HCT116 (cell line): ENCODE measurements at regions of chr3 and their contacts with region 1.

Region 1: DNA sequence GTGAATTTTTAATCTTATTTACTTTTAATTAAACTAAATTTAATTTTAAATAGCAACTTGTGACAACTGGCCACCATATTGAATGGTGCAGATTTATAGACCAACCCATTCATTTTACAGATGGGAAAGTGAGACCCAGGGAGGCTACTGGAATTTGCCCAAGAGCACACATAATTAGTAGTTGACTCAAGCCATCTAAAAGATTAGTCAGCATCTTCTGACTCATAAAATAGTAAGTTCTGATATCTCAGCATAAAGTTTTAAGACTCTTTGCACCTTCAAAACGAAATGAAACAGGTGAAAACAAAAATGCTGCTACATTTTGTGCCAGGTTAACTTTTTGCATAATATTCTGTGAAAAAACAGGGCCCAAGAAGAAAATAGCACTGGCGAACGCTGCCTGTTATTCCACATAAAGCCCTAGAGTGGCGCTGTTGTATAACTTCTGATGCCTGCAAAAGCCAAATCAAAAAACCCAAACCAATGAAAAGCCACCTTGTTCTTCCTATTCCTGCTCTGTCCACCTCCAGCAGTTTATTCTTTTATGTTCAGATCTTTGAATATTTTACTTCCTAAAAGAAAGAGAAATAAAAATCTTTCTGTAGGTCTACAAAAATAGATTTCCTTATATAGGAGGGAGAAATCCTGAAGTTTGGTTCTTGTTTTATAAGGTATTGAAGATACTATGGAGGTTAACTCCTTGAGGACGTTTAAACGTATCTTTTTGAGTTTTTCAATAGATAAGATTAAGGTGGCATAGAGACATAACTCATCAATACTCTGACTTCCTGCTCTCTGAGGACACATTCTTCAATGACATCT is 62.8 kb downstream of the OTOL1 start:
- DNase-seq: peak; percentile 39
- ATAC-seq: peak; percentile 76
- H3K4me3 ChIP-seq: no peak overlapping the region
- H3K27ac ChIP-seq: no peak overlapping the region
- H3K4me1 ChIP-seq: no peaks in the 10 kb centered on the region
- H3K27me3 ChIP-seq: no peaks in the 10 kb centered on the region
- CTCF ChIP-seq: peak; percentile 62 to 89 (median 87)
- POLR2A ChIP-seq: no peak
- RAD21 ChIP-seq: peak; percentile 76

Region 2: GRCh38 chr3:161851941-161852566 is 292.7 kb after region 1 on chr3:
- CTCF ChIA-PET with region 1: interaction called, 3 read pairs
- POLR2A ChIA-PET with region 1: no interaction called
- RAD21 ChIA-PET with region 1: no interaction called
- intact Hi-C with region 1: loop called (anchors 5 kb)
- DNase-seq: peak; percentile 46
- ATAC-seq: peak; percentile 81
- H3K4me3 ChIP-seq: no peak overlapping the region
- H3K27ac ChIP-seq: no peak overlapping the region
- H3K4me1 ChIP-seq: 0 out of 4 replicates have a peak, but pooled peaks cover 0 to 6% of the 10 kb centered on the region in 2 experiments
- H3K27me3 ChIP-seq: no peaks in the 10 kb centered on the region
- CTCF ChIP-seq: peak; percentile 48 to 84 (median 81); a peak in 5 of 6 replicates
- POLR2A ChIP-seq: no peak
- RAD21 ChIP-seq: peak; percentile 80

Region 3: DNA sequence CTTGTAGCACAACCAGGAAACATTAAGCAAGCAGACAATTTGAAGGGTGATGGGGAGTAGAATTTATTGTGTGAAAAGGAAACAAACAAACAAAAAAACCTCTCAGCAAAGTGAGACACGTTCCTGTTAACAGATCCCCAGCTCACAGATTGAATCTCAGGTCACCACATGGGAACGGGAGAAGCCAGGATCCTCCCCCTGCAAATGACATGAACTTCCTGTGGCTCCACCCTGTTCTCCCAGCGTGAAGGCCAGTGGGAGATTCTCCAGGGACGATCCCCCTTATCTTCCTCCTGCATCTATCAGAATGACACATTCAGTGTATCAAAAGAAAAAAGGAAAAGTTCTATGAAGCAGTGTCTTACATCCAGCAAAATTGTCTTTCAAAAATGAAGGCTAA is 1425.4 kb after region 1 on chr3:
- CTCF ChIA-PET with region 1: no interaction called
- POLR2A ChIA-PET with region 1: no interaction called
- RAD21 ChIA-PET with region 1: no interaction called
- intact Hi-C with region 1: loop called (anchors 5 kb)
- DNase-seq: no peak
- ATAC-seq: no peak
- H3K4me3 ChIP-seq: no peak overlapping the region
- H3K27ac ChIP-seq: no peak overlapping the region
- H3K4me1 ChIP-seq: no peaks in the 10 kb centered on the region
- H3K27me3 ChIP-seq: no peaks in the 10 kb centered on the region
- CTCF ChIP-seq: no peak
- POLR2A ChIP-seq: no peak
- RAD21 ChIP-seq: no peak

Region 4: DNA sequence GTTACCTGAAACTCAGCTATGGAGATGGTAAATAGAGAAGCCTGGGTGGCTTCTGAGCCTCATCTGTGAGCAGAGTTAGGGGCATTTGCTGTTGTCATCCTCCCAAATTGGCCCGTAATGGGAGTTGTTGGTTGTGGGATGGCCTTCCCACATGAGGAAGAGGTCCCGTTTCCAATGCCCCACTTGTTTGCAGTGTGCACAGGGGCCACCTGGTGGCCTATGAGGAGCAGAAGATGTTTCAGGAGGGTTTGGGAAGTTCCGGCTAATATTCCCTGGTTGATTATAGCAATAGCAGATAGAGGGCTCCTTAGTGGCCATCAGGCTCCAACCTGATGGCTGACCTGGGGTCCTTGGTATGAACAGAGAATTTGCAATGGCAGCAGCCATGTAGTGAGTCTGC is 1483.7 kb after region 1 on chr3:
- CTCF ChIA-PET with region 1: no interaction called
- POLR2A ChIA-PET with region 1: no interaction called
- RAD21 ChIA-PET with region 1: no interaction called
- intact Hi-C with region 1: loop called (anchors 1 kb)
- DNase-seq: peak; percentile 18
- ATAC-seq: peak; percentile 81
- H3K4me3 ChIP-seq: no peak overlapping the region
- H3K27ac ChIP-seq: no peak overlapping the region
- H3K4me1 ChIP-seq: no peaks in the 10 kb centered on the region
- H3K27me3 ChIP-seq: no peaks in the 10 kb centered on the region
- CTCF ChIP-seq: peak; percentile 41 to 53 (median 43); a peak in 5 of 6 replicates
- POLR2A ChIP-seq: no peak
- RAD21 ChIP-seq: peak; percentile 63

Region 5: DNA sequence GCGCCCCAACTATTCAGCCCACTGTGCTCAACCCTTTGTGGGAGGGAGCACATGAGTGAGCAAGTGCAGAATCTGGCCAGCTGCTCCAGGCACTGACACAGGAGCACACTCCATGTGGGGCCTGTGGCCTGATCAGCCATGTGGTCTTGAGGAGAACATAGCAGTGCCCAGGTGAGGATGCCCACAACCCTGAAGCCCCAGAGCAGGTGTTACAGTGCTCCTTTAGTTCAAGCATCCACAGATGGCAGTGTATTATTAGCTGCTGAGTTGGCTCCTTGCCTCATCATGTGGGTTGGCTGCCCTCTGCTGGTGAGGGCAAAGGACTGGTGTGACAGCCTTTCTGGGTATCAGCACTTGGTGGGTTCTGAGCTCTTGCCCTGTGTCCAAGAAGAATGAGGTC is 1930.7 kb after region 1 on chr3:
- CTCF ChIA-PET with region 1: no interaction called
- POLR2A ChIA-PET with region 1: no interaction called
- RAD21 ChIA-PET with region 1: no interaction called
- intact Hi-C with region 1: loop called (anchors 1 kb)
- DNase-seq: peak; percentile 48
- ATAC-seq: peak; percentile 95
- H3K4me3 ChIP-seq: no peak overlapping the region
- H3K27ac ChIP-seq: no peak overlapping the region
- H3K4me1 ChIP-seq: no peaks in the 10 kb centered on the region
- H3K27me3 ChIP-seq: no peaks in the 10 kb centered on the region
- CTCF ChIP-seq: peak; percentile 74 to 81 (median 77)
- POLR2A ChIP-seq: no peak
- RAD21 ChIP-seq: peak; percentile 80